GM13977 (cell line): ENCODE measurements at regions of chr22 and their contacts with region 1.

Region 1: GRCh38 chr22:19398206-19398605 is 33.3 kb downstream of the HIRA start:
- DNase-seq: no peak
- CTCF ChIP-seq: no peak

Region 2: GRCh38 chr22:19629720-19630419 is 231.7 kb after region 1 on chr22:
- in situ Hi-C with region 1: loop called (anchors 10 kb)
- DNase-seq: peak; percentile 94
- CTCF ChIP-seq: peak; percentile 96

Region 3: GRCh38 chr22:19648419-19648929 is 250.3 kb after region 1 on chr22:
- in situ Hi-C with region 1: no loop called
- DNase-seq: no peak
- CTCF ChIP-seq: no peak

Region 4: DNA sequence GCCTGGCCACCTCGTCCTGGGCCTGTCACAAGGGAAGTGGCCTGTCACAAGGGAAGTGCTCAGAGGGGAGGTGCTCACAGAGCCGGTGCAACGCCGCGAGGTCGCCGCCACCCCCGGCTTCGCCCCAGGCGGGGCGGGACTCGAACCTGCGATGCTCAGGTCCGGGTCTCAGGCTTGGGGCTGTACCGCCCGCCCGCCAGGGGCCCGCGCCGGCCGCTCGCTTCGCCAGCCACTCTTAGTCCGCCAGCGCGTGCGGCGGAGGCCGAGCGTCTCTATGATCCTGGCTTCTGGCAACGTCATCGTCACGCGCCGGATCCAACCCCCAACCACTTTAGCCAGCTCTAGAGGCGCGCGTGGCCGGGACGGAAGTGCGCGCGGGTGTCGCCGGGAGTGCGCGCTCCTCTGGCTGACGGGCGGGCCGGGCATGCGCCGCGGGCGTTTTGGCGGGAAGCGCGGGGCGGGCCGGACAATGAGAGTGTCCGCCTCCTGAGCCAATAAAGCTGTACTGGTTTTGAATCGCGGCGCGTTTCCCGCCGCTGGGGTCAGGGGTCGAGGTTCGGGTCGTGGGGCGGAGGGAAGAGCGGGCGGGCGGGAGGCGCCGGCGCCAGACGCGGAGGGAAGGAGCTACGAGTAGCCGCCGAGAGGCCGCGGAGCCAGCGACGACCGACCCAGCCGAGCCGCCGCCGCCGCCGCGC is 718.9 kb after region 1 on chr22 and contains the start of gene TRMT2A:
- in situ Hi-C with region 1: no loop called
- DNase-seq: peak; percentile 100
- CTCF ChIP-seq: peak; percentile 38